GM10248 (cell line): ENCODE measurements at regions of chr17 and their contacts with region 1.

Region 1: GRCh38 chr17:7351665-7352501 is at the start of gene KCTD11:
- DNase-seq: peak; percentile 95
- CTCF ChIP-seq: peak; percentile 57

Region 2: DNA sequence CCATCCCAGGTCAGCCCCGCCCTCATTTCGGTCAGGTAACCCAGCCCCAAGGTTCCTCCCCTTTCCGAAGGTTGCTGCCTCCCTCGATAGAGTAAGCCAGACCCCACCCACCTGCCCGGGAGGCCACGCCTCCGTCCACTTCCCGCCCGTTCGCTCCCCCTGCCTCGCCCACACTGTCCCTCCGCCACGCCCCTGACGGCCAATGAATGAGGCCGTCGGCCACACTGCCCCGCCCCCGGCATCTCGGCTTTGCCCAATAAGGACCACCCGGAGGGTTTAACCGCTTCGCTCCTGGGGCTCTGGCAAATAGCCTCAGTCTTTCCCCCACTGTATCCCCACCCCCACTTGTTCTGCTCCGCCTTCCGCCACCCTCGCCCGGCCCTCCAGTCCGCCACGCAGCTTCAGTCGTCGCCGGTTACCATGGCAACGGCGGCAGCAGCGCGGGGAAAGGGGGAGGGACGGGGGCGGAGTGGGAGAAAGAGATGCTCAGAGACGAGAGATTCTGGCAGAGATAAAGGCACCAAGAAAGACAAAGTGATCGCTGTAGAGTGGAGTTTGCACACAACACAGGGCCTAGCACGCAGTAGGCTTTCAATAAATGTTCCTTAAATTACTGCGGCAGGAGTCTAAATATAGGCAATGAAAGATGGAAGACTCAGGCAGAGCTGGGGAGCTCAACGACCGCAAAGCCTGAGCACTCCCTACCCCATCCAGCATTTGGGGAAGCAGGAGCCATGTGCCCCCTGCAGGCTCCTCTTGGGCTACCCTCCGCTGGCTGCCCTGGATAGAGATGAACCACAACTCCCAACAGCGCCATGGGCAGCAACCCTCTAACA is 137.4 kb before region 1 on chr17:
- CTCF ChIA-PET with region 1: no interaction called
- POLR2A ChIA-PET with region 1: no interaction called
- DNase-seq: peak; percentile 97
- CTCF ChIP-seq: peak; percentile 32

Region 3: GRCh38 chr17:7323731-7324437 is 28.0 kb before region 1 on chr17:
- CTCF ChIA-PET with region 1: interaction called, 10 read pairs
- POLR2A ChIA-PET with region 1: interaction called, 4 read pairs
- DNase-seq: peak; percentile 78
- CTCF ChIP-seq: peak; percentile 80

Region 4: GRCh38 chr17:7336240-7337175 is 15.4 kb before region 1 on chr17 and contains the start of gene ACAP1:
- CTCF ChIA-PET with region 1: interaction called, 62 read pairs
- POLR2A ChIA-PET with region 1: interaction called, 3 read pairs
- DNase-seq: peak; percentile 81
- CTCF ChIP-seq: peak; percentile 18

Region 5: GRCh38 chr17:7374353-7374752 is 22.5 kb after region 1 on chr17:
- CTCF ChIA-PET with region 1: interaction called, 24 read pairs
- POLR2A ChIA-PET with region 1: no interaction called
- DNase-seq: no peak
- CTCF ChIP-seq: no peak

Region 6: GRCh38 chr17:7435221-7435675 is 83.4 kb after region 1 on chr17 and contains the start of gene TMEM102:
- CTCF ChIA-PET with region 1: interaction called, 27 read pairs
- POLR2A ChIA-PET with region 1: no interaction called
- DNase-seq: peak; percentile 97
- CTCF ChIP-seq: no peak

Region 7: GRCh38 chr17:7589204-7589868 is 237.5 kb after region 1 on chr17:
- CTCF ChIA-PET with region 1: interaction called, 16 read pairs
- POLR2A ChIA-PET with region 1: no interaction called
- DNase-seq: peak; percentile 85
- CTCF ChIP-seq: peak; percentile 80